MCF 10A (cell line): ENCODE measurements at regions of chr20 and their contacts with region 1.

Region 1: DNA sequence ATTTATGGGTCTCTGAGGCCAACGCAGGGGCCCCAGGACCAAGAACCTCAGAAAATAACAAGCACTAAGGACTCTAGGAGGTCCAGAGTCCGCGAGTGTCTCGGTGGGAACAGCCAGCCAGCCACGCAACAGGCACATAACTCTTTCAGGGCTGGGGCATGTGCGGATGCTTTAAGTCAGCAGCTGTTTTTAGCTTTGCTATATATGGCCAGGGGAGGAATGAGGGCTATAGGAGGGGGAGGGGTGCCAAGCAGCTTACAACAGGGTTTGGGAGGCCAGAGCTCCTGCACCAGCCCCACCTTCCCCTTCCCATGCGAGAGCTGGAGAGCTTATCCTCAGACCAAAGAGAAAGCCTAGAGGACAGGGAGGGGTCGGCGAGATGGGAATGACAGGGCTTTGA is 6.2 kb downstream of the JPH2 start:
- DNase-seq: no peak
- H3K4me3 Mint-ChIP-seq: no peak overlapping the region
- H3K27ac Mint-ChIP-seq: no peak overlapping the region
- H3K4me1 Mint-ChIP-seq: peaks cover 41% of the 10 kb centered on the region
- H3K27me3 Mint-ChIP-seq: no peaks in the 10 kb centered on the region
- CTCF ChIP-seq: no peak

Region 2: DNA sequence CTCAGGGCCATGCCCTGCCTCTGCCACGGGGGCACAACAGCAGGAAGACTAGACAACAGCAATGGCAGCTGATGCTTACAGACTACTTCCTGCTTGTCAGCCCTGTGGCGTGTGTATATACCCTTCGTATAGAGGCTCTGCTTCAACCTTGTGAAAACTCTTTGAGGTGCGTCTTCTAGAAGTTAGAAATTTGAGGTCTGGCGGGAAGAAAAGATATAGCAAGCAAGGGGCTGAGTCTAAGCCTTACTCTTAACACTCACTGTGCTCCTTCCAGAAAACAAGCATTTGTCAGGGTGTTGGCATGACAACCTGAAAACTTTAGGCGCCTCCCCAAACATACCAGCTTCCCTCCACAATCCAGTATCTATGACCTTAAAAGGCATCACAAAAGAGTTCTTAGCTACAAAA is 27.2 kb before region 1 on chr20:
- CTCF ChIA-PET with region 1: interaction called, 4 read pairs
- POLR2A ChIA-PET with region 1: interaction called, 17 read pairs
- intact Hi-C with region 1: no loop called
- DNase-seq: no peak
- H3K4me3 Mint-ChIP-seq: no peak overlapping the region
- H3K27ac Mint-ChIP-seq: no peak overlapping the region
- H3K4me1 Mint-ChIP-seq: peaks cover 15% of the 10 kb centered on the region
- H3K27me3 Mint-ChIP-seq: no peaks in the 10 kb centered on the region
- CTCF ChIP-seq: no peak

Region 3: DNA sequence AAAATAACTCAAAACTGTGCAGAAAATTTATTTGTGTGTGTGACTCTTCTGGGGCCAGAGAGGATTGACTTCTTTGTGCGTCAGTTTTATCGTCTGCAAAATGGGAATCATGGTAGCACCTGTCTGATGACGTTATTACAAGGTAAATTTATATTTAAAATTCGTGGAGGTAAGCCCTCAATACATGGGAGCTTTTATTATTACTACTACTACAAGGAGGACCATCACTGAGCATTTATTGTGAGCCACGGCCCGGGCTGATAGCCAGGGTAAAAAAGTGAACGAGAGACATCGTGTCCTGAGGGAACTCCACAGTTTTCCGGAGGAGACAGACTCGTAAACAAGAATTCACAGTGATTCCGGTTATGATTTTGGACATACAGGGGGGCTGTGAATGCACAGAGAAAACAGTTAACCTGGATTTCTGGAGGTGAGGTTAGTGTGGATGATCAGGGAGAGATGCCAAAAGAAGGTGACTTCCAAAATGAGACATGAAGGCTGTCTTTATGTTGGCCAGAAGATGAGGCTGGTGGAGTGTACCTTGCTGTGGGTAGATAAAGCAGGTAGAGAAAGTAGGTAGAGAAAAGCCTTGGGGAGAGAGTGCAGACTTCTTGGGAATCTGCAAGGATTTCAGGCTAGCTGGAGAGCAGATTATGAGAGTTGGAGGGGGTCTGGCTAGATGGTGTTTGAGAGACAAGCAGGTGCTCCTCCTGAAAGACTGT is 351.6 kb after region 1 on chr20:
- CTCF ChIA-PET with region 1: no interaction called
- POLR2A ChIA-PET with region 1: no interaction called
- intact Hi-C with region 1: no loop called
- DNase-seq: peak; percentile 5
- H3K4me3 Mint-ChIP-seq: no peak overlapping the region
- H3K27ac Mint-ChIP-seq: no peak overlapping the region
- H3K4me1 Mint-ChIP-seq: peaks cover 10% of the 10 kb centered on the region
- H3K27me3 Mint-ChIP-seq: no peaks in the 10 kb centered on the region
- CTCF ChIP-seq: no peak

Region 4: GRCh38 chr20:44780226-44780625 is 599.4 kb after region 1 on chr20:
- CTCF ChIA-PET with region 1: no interaction called
- POLR2A ChIA-PET with region 1: no interaction called
- intact Hi-C with region 1: no loop called
- DNase-seq: peak; percentile 60
- H3K4me3 Mint-ChIP-seq: no peak overlapping the region
- H3K27ac Mint-ChIP-seq: no peak overlapping the region
- H3K4me1 Mint-ChIP-seq: no peaks in the 10 kb centered on the region
- H3K27me3 Mint-ChIP-seq: peaks cover 22% of the 10 kb centered on the region
- CTCF ChIP-seq: no peak